ENCODE measurements at regions of chr5 and their contacts with region 1.

Region 1: DNA sequence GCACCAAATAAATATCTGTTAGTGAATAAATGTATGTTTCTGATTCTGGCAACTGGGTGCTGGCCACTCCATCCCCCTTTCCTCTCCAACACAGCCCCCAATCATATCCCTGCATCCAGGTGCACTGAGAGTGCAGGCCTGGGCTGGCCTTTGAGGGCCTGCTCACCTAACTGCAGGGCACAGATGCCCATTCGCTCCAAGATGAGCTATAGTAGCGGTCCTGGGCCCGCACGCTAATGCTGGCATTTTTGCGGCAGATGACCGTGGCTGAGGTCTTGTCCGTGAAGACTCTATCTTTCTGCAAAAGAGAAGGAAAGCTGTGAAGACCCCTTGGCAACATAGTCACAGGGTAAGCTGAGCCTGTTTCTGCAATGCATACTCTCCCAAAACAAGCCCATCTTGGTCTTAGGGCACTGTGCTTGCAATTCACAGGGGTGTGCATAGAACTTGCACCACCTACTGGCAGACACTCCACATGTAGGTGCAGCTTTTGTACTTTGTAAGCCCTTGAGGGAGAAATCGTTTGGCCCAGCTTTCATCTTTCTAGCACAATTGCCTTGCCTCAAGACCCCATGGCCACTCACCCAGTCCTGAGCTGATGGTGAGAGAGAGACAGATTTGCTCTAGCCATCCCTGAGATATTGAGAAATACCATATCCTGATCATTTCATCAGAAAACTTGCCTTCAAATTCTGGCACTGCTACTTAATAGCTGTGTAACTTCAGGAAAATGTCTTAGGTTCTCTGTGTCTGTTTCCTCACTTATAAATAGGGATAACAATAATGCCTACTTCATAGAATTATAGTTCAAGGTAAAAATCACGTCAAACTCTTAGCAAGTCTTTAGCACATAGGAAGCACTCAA is 13.5 kb downstream of the IL12B start:
- DNase-seq: peak; percentile 69
- ATAC-seq: peak; percentile 74
- H3K4me3 Mint-ChIP-seq: no peak overlapping the region
- H3K27ac Mint-ChIP-seq: no peak overlapping the region
- H3K4me1 Mint-ChIP-seq: no peaks in the 10 kb centered on the region
- H3K27me3 Mint-ChIP-seq: peaks cover 20% of the 10 kb centered on the region

Region 2: GRCh38 chr5:158992037-158992740 is 324.6 kb before region 1 on chr5:
- CTCF ChIA-PET with region 1: no interaction called
- POLR2A ChIA-PET with region 1: no interaction called
- DNase-seq: no peak
- ATAC-seq: no peak
- H3K4me3 Mint-ChIP-seq: no peak overlapping the region
- H3K27ac Mint-ChIP-seq: no peak overlapping the region
- H3K4me1 Mint-ChIP-seq: no peaks in the 10 kb centered on the region
- H3K27me3 Mint-ChIP-seq: peaks cover 3% of the 10 kb centered on the region

Region 3: GRCh38 chr5:159286420-159287035 is 30.2 kb before region 1 on chr5:
- CTCF ChIA-PET with region 1: interaction called, 33 read pairs
- POLR2A ChIA-PET with region 1: no interaction called
- DNase-seq: peak; percentile 30
- ATAC-seq: peak; percentile 49
- H3K4me3 Mint-ChIP-seq: no peak overlapping the region
- H3K27ac Mint-ChIP-seq: no peak overlapping the region
- H3K4me1 Mint-ChIP-seq: peaks cover 3% of the 10 kb centered on the region
- H3K27me3 Mint-ChIP-seq: no peaks in the 10 kb centered on the region

Region 4: DNA sequence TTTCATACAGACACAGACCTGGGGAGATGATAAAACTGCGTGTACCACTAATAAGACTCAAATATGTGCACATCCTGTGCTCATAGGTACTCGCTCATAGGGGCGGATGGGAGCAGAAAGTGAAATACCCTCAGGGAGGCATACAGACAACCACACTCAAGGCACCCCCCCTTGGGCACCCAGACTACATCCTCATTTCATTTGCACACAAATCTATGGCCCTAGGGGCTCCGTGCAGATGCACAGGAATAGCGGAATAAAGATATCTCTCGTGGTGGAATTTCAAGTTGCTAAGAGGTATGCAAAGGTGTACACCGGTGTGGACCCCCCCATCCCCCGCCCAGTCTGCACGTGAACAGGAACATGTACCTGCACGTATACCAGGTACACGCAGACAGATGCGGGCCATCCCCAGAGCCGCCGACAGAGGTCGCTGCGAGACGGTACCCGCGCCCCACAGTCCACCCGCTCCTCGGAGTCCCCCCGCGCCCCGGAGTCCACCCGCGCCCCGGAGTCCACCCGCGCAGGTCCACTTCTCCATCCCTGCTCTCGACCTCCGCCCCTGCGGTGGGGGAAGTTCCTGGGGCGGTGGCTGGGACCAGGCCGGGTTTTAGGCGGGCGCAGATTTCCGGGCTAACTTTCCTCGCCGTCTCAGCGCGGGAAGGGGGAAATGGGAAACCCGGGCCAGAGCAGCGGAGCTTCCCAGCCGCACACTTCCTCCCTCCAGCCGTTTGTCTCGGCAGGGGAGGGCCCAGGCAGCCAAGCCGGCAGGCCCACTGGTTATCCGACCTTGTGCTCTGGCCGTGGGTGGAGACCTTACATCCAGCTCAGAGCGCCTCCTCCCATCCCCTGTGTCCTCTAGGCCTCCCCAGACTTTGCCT is 14.6 kb after region 1 on chr5:
- CTCF ChIA-PET with region 1: interaction called, 14 read pairs
- POLR2A ChIA-PET with region 1: no interaction called
- DNase-seq: peak; percentile 81
- ATAC-seq: peak; percentile 92
- H3K4me3 Mint-ChIP-seq: peak overlapping the region; percentile 62
- H3K27ac Mint-ChIP-seq: peak overlapping the region; percentile 73
- H3K4me1 Mint-ChIP-seq: peaks cover 33% of the 10 kb centered on the region
- H3K27me3 Mint-ChIP-seq: peaks cover 26% of the 10 kb centered on the region

Region 5: DNA sequence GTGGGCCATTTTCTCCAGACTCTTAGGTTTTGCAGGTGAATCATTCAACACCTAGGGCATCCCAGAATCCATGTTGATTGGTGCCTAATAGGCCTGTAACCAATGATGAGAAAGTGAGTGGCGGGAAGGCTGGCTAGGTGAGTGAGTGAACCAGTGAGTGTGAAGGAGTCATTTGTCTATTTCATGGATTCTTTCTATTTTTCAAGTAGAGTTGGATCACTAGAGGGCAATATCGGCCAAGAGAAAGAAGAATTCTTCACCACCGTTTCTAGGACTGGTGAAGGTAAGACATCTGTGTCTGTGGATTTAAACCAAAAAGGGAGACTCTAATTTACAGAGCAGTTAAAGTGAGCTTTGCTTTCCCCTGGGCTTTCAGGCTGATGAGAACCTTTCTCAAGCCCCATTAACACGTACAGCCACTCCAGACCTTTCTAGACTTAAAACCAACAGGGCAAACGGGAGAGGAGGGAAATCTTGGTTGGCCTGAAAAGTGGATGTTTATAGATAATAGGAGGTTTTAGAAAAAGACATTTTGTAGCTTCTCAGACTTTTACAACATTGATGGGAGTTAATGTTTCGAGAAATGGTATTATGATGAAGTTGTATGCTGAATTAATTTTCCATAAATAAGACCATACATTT is 127.8 kb after region 1 on chr5:
- CTCF ChIA-PET with region 1: interaction called, 12 read pairs
- POLR2A ChIA-PET with region 1: no interaction called
- DNase-seq: no peak
- ATAC-seq: no peak
- H3K4me3 Mint-ChIP-seq: no peak overlapping the region
- H3K27ac Mint-ChIP-seq: no peak overlapping the region
- H3K4me1 Mint-ChIP-seq: peaks cover 2% of the 10 kb centered on the region
- H3K27me3 Mint-ChIP-seq: peaks cover 30% of the 10 kb centered on the region

Region 6: GRCh38 chr5:159581502-159582249 is 264.9 kb after region 1 on chr5:
- CTCF ChIA-PET with region 1: no interaction called
- POLR2A ChIA-PET with region 1: no interaction called
- DNase-seq: no peak
- ATAC-seq: no peak
- H3K4me3 Mint-ChIP-seq: no peak overlapping the region
- H3K27ac Mint-ChIP-seq: no peak overlapping the region
- H3K4me1 Mint-ChIP-seq: no peaks in the 10 kb centered on the region
- H3K27me3 Mint-ChIP-seq: peaks cover 3% of the 10 kb centered on the region

Measured in activated CD8-positive, alpha-beta T cell treated with anti-CD3 and anti-CD28 coated beads, Interleukin-2, amount 10 ng/mL, durations not matched to agents 7 days and 5 days (primary cell).